Prostate gland (tissue), 2 donors: ENCODE measurements at regions of chr22 and their contacts with region 1.

Region 1: GRCh38 chr22:29734838-29735237 is 15.0 kb downstream of the CABP7 start:
- DNase-seq: no peak
- H3K4me3 ChIP-seq: no peak overlapping the region
- H3K27ac ChIP-seq: no peak overlapping the region
- H3K4me1 ChIP-seq: no peaks in the 10 kb centered on the region
- H3K27me3 ChIP-seq: no peaks in the 10 kb centered on the region
- CTCF ChIP-seq: no peak
- POLR2A ChIP-seq: no peak

Region 2: GRCh38 chr22:29719876-29720240 is 15.0 kb before region 1 on chr22 and contains the start of gene CABP7:
- intact Hi-C with region 1: loop called (anchors 1 kb)
- DNase-seq: no peak
- H3K4me3 ChIP-seq: peak within 1 kb of the TSS; percentile 5 to 25
- H3K27ac ChIP-seq: no peak within 1 kb of the TSS
- H3K4me1 ChIP-seq: peaks cover 7% of the 10 kb centered on the region
- H3K27me3 ChIP-seq: peaks cover 9% of the 10 kb centered on the region
- CTCF ChIP-seq: no peak
- POLR2A ChIP-seq: no peak
- total RNA-seq, gene CABP7: 1.5 TPM in 1 of 2 donors, not detected in the other